ENCODE measurements at regions of chr2 and their contacts with region 1.

Region 1: DNA sequence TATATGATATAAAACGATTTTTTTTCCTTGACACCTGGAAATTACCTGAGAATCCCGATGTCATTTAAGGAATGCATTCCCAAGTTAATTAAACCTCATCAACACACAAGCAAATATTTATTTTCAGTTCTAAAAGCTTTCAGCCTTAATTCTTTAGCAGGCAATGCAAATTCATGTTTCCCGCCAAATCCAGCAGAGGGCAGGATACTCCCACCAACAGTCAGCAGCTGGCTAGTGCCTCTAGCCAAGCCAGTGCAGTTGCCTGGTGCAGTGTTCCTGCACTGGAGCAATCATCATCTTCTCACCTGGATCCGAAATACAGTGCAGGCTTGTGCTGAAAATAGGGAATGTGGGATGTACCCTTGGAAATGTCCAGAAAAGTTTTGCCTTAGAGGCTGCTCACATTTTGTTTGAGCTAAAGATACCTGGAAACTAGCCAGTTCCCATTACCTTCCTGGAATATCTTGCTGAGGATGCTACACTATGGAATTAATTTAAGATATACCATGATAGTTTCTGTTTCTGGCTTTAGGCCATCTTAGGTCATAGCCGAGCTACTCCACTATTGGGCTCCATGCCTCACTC is 48.4 kb upstream of the CYTIP start:
- DNase-seq: peak; percentile 53
- ATAC-seq: peak; percentile 92
- H3K4me3 ChIP-seq: no peak overlapping the region
- H3K27ac ChIP-seq: no peak overlapping the region
- H3K4me1 ChIP-seq: no peaks in the 10 kb centered on the region
- H3K27me3 ChIP-seq: peaks cover 8% of the 10 kb centered on the region; the same call in 1 of the 2 replicates
- CTCF ChIP-seq: peak; percentile 87

Region 2: GRCh38 chr2:157443795-157444640 is 48.3 kb before region 1 on chr2 and contains the start of gene CYTIP:
- CTCF ChIA-PET with region 1: no interaction called
- POLR2A ChIA-PET with region 1: no interaction called
- in situ Hi-C with region 1: no loop called
- intact Hi-C with region 1: no loop called
- DNase-seq: no peak
- ATAC-seq: no peak
- H3K4me3 ChIP-seq: no peak within 1 kb of the TSS
- H3K27ac ChIP-seq: no peak within 1 kb of the TSS
- H3K4me1 ChIP-seq: no peaks in the 10 kb centered on the region
- H3K27me3 ChIP-seq: no peaks in the 10 kb centered on the region; the same call in 1 of the 2 replicates
- CTCF ChIP-seq: no peak
- total RNA-seq, gene CYTIP: 0.57 TPM

Region 3: DNA sequence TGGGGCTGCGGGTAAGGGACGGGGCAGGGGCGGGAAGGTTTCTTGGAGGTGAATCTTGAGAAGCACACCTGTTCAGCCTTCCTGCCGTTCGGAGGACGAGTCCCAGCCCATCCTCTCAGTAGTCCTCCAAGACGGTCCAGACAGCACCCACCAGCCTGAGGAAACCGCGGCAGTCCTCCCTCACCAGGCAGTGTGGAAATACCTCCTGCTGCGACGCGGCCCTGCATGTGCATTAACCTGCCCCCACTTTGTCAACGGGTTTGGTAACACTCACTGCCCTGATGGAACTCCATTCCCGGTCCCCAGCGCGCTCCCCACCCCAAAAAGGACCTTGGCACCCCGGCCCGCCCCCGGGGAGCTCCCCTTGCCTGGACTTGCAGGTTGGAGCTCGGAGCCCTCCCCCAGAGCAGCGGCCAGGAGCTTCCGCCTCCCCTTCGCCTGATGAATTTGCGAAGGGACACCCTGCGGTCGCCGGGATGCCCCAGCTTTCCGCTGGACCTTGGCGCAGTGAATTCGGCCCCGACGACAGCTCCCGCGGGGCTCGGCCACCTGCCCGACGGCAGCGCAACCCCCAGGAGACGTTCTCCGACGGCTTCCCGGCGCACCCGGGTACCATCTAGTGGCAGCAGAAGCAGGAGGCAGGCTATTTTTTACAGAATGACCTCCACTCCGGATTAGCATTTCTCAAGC is 104.9 kb after region 1 on chr2:
- CTCF ChIA-PET with region 1: no interaction called
- POLR2A ChIA-PET with region 1: no interaction called
- in situ Hi-C with region 1: no loop called
- intact Hi-C with region 1: loop called (anchors 10 kb)
- DNase-seq: no peak
- ATAC-seq: 0 out of 2 replicates have a peak, but pooled peaks have one; percentile 56
- H3K4me3 ChIP-seq: 0 out of 4 replicates have a peak overlapping the region, but pooled peaks of 1 of the 2 experiments have one; percentile 7
- H3K27ac ChIP-seq: no peak overlapping the region
- H3K4me1 ChIP-seq: no peaks in the 10 kb centered on the region
- H3K27me3 ChIP-seq: peaks cover 3% of the 10 kb centered on the region; the same call in 1 of the 2 replicates
- CTCF ChIP-seq: peak; percentile 55

Region 4: GRCh38 chr2:157628477-157629415 is 136.5 kb after region 1 on chr2 and contains the start of gene ACVR1C:
- CTCF ChIA-PET with region 1: interaction called, 4 read pairs
- POLR2A ChIA-PET with region 1: no interaction called
- in situ Hi-C with region 1: no loop called
- intact Hi-C with region 1: loop called (anchors 10 kb)
- DNase-seq: no peak
- ATAC-seq: peak; percentile 97
- H3K4me3 ChIP-seq: peak within 1 kb of the TSS; percentile 43 to 61
- H3K27ac ChIP-seq: no peak within 1 kb of the TSS
- H3K4me1 ChIP-seq: no peaks in the 10 kb centered on the region
- H3K27me3 ChIP-seq: peaks cover 14% of the 10 kb centered on the region
- CTCF ChIP-seq: peak; percentile 60
- total RNA-seq, gene ACVR1C: not detected

Region 5: GRCh38 chr2:157769856-157770255 is 277.6 kb after region 1 on chr2:
- CTCF ChIA-PET with region 1: no interaction called
- POLR2A ChIA-PET with region 1: no interaction called
- in situ Hi-C with region 1: no loop called
- intact Hi-C with region 1: loop called (anchors 5 kb)
- DNase-seq: no peak
- ATAC-seq: no peak
- H3K4me3 ChIP-seq: no peak overlapping the region
- H3K27ac ChIP-seq: no peak overlapping the region
- H3K4me1 ChIP-seq: no peaks in the 10 kb centered on the region
- H3K27me3 ChIP-seq: no peaks in the 10 kb centered on the region
- CTCF ChIP-seq: no peak

Region 6: DNA sequence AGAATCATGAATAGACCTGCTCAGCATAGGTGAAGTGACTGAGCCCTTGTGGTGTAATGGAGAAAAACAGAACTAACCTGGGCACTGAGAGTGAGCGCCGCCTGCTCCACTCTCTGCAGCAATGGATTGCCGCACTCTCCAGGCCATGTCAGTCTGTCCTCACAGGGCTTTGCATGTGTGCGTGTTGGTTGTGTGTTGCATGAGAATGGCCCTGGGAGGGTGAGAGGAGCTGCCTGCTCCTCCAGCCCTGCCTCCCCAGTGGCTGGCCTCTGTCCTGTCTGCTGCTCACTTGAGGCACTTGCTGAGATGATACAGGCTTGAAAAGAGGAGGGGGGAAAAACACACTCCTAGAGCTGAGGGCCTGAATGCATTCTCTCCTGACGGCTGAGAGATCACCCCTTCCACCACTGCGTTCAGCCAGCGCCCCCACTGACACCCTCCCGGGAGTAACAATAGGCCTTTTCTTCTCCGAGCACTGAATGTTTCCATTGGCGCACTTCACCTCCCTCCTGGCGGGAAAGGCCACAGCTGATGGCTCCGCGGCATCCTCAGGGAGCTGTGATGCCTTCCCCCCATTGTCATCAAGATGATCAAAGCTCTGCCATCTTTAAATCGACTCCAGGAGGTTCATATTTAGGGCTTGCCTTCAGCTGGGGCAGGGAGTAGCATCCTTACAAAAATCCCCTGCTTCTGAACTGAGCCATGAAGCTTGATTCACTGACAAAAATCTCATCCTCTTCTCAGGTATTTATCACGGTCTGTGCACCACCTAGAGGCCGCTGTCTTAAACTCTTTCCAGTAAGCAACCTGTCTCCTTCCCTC is 1253.0 kb after region 1 on chr2:
- CTCF ChIA-PET with region 1: no interaction called
- POLR2A ChIA-PET with region 1: no interaction called
- in situ Hi-C with region 1: no loop called
- intact Hi-C with region 1: loop called (anchors 10 kb)
- DNase-seq: no peak
- ATAC-seq: peak; percentile 83
- H3K4me3 ChIP-seq: no peak overlapping the region
- H3K27ac ChIP-seq: no peak overlapping the region
- H3K4me1 ChIP-seq: no peaks in the 10 kb centered on the region; the same call in none of the 2 replicates
- H3K27me3 ChIP-seq: peaks cover 20% of the 10 kb centered on the region
- CTCF ChIP-seq: peak; percentile 79

Measured in Panc1 (cell line).